ENCODE measurements at regions of chr5 and their contacts with region 1.

Region 1: DNA sequence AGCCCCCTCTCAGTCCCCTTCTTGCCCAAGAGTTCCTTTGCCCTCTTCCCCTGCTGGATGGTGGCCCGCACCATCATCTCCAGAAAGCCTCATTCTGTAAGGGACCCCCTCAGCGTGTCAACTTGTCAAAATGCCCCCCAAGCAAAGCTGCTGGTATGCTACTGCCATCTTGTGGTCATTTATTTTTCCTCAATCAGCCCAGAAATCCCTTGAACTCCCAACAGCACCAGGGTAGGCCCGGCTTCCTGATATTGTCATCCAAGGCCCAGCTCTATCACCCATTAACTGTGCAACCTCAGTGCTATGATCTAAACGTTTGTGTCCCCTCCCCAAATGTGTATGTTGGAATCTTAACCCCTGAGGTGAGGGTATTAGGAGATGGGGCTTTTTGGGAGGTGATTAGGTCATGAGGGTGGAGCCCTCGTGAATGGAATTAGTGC is 53.2 kb upstream of the FBXW11 start:
- DNase-seq: peak; percentile 34
- ATAC-seq: peak; percentile 62
- H3K4me3 ChIP-seq: no peak overlapping the region
- H3K27ac ChIP-seq: no peak overlapping the region
- H3K4me1 ChIP-seq: no peaks in the 10 kb centered on the region
- H3K27me3 ChIP-seq: no peaks in the 10 kb centered on the region
- CTCF ChIP-seq: peak; percentile 86

Region 2: GRCh38 chr5:170782438-170782837 is 1277.2 kb before region 1 on chr5:
- CTCF ChIA-PET with region 1: no interaction called
- POLR2A ChIA-PET with region 1: no interaction called
- intact Hi-C with region 1: no loop called
- DNase-seq: no peak
- ATAC-seq: no peak
- H3K4me3 ChIP-seq: no peak overlapping the region
- H3K27ac ChIP-seq: no peak overlapping the region
- H3K4me1 ChIP-seq: no peaks in the 10 kb centered on the region
- H3K27me3 ChIP-seq: peaks cover 5% of the 10 kb centered on the region; the same call in 1 of the 2 replicates
- CTCF ChIP-seq: no peak

Region 3: DNA sequence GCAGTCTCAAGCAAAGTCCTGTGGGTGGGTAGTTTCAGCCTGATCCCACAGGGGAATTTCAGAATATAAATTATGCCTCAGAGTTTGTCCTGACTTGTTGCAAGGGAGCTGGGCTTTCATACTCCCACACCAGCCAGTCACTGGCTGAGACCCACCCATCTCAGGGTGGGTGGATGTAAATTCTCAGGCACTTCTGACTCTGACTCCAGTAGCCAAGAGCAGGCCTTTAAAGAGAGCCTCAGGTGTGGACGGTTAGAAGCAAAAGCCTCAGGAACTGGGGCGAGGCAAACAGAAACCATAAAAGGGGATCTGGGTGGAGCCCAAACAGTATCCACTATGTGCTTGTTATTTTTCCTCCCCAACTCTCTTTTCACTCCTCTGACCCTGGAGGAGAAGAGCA is 24.6 kb before region 1 on chr5:
- CTCF ChIA-PET with region 1: interaction called, 17 read pairs
- POLR2A ChIA-PET with region 1: no interaction called
- intact Hi-C with region 1: no loop called
- DNase-seq: no peak
- ATAC-seq: no peak
- H3K4me3 ChIP-seq: no peak overlapping the region
- H3K27ac ChIP-seq: no peak overlapping the region
- H3K4me1 ChIP-seq: no peaks in the 10 kb centered on the region
- H3K27me3 ChIP-seq: no peaks in the 10 kb centered on the region
- CTCF ChIP-seq: no peak